ENCODE measurements at regions of chr6 and their contacts with region 1.

Region 1: DNA sequence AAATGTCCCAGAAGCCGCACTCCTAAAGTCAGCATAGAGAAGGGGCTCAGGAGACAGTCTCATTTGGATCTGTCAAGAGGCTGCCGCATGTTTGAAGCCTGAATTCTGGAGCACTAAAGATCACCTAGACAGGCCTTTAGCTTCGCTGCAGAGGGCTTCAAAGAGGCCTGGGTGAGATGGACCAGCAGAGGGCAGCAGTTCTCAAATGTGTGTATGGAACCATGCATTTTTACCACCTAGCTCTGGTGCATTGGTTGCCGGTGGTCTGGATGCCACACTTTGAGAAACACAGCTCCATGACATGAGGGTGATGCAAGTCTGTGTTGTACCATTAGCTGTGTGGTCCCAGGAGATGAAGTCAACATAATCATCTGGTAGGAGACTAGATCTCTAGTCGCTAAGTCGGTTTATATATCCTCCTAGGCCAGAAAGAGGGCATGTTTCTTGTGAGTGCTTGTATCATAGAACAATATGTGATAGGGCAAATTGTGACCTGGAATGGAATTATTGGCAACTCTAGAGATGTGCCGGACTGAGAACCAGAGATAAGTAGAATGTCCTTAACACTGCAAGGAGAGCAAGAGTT is 64.8 kb downstream of the KIAA0319 start:
- DNase-seq: peak; percentile 69
- H3K4me3 ChIP-seq: no peak overlapping the region
- H3K27ac ChIP-seq: no peak overlapping the region
- H3K4me1 ChIP-seq: no peaks in the 10 kb centered on the region
- H3K27me3 ChIP-seq: no peaks in the 10 kb centered on the region
- CTCF ChIP-seq: peak; percentile 40 to 83 (median 72)
- POLR2A ChIP-seq: no peak

Region 2: DNA sequence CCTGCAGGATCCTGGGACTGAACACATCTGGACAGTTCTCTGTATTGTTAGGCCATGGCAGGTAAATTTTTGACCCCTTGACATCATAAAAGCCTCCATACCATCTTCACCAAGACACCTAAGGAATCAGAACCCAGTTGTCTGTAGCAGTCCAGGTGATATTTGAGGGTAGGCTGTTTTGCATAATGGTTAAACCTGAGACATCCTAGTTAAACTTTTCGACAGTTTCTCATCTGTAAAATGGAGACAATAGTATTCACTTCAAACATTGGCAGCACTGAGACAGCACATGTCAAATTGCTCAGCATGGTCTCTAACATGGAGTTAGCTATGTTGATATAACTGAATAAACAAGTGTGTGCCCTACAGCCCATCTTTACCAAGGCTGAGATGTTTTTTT is 113.0 kb after region 1 on chr6:
- intact Hi-C with region 1: loop called (anchors 2 kb)
- DNase-seq: no peak
- H3K4me3 ChIP-seq: no peak overlapping the region
- H3K27ac ChIP-seq: no peak overlapping the region
- H3K4me1 ChIP-seq: no peaks in the 10 kb centered on the region
- H3K27me3 ChIP-seq: no peaks in the 10 kb centered on the region
- CTCF ChIP-seq: no peak
- POLR2A ChIP-seq: no peak

Region 3: DNA sequence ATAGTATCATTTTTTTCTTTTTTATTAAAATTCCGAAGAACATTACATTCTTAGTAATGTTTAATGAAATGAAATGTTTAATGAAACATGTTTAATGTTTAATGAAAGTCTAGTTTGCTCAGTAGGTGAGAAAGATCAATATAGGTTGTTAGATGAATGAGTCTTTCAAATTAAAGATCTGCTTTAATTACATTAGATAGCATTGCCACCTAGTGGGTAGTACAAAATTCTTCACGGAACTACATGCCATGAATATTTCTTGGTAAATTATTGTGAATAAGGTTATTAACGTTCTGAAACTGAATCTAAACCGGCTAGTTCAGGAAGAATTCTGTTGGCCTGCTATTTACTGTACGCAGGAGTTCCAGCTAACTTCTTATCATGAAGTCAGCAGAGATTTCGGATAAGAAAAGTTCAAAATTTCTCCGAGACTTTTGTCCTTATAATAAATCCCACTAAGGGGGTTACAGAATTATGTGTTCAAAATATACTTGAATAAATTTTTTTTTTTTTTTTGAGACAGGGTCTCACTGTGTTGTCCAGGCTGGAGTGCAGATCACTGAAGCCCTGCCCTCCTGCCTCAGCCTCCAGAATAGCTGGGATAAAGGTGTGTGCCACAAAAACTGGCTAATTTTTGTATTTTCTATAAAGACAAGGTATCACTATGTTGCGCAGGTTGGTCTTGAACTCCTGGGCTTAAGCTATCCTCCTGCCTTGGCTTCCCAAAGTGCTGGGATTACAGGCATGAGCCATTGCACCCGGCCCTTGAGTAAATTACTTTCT is 185.7 kb after region 1 on chr6:
- intact Hi-C with region 1: loop called (anchors 5 kb)
- DNase-seq: no peak
- H3K4me3 ChIP-seq: no peak overlapping the region
- H3K27ac ChIP-seq: no peak overlapping the region
- H3K4me1 ChIP-seq: no peaks in the 10 kb centered on the region
- H3K27me3 ChIP-seq: no peaks in the 10 kb centered on the region
- CTCF ChIP-seq: peak in 3 of 4 experiments; percentile 36 to 70 (median 66)
- POLR2A ChIP-seq: no peak

Region 4: DNA sequence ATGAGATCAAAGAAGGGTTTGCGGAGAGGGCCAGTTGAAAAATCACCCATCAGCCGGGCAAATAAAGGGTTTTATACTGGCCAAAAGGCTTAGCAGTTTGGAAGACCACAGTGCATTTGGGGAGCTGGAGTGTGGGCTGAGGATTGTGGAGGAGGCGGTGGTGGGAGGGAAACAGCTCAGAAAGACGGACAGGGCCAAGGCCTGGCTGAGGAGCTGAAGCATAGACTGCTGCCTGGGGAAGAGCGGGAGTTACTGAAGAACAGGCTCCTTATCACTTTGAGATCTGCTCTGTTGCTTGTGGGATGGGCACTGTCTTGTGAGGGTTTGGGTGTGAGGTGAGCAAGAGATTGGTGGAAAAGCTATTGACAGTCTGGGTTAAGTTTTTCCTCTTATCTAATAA is 842.2 kb after region 1 on chr6:
- intact Hi-C with region 1: no loop called
- DNase-seq: no peak
- H3K4me3 ChIP-seq: no peak overlapping the region
- H3K27ac ChIP-seq: no peak overlapping the region
- H3K4me1 ChIP-seq: no peaks in the 10 kb centered on the region
- H3K27me3 ChIP-seq: no peaks in the 10 kb centered on the region
- CTCF ChIP-seq: no peak
- POLR2A ChIP-seq: no peak

Measured in prostate gland (tissue), 2 donors.